ENCODE measurements at regions of chr6 and their contacts with region 1.

Region 1: DNA sequence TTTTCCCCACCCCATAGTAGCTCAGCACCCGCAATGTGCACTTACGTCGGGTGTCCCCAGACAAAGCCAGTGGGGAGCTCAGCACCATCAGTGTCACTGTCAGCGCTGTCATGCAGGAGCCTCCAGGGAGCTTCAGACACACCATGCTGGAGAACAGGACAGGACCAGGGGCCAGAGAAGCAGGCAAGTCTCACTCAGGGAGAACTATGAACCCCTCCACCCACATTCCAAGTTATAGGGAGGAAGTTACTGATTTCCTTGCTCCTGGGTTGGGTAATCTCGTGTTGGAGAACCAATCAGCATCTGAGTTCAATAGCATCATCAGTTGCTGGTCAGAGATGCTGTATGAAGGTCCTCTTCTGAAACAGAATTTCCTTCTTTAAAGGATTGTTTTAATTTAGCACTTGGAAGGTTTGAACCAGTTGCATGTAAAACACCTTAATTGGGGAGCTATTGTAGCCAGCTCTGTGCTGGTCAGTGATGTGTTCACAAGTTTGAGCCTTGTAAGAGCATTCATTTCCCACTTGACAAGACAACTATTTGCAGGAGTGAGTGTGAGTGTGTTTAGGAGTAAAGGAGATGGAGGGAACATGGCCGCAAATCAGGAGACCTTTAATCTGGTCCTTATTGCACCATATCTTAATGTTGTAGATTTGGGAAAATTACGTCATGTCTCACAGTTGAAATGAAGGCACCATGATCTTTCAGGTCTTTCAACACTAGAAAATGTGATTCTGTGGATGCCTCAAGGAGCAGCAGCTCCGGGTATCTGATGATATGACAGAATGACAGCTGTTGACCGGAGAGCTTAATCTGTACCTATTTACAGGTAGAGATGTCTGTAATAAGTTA is at the start of gene HLA-DRB1:
- DNase-seq: peak; percentile 73 to 86 (median 74)
- H3K4me3 ChIP-seq: peak within 1 kb of the TSS; percentile 47 to 83 (median 74)
- H3K4me3 Mint-ChIP-seq: peak within 1 kb of the TSS; percentile 90 to 96
- H3K27ac ChIP-seq: peak within 1 kb of the TSS; percentile 63 to 80
- H3K27ac Mint-ChIP-seq: peak within 1 kb of the TSS; percentile 91 to 99 (median 97)
- H3K4me1 ChIP-seq: peaks cover 0 to 10% of the 10 kb centered on the region in 2 donors
- H3K4me1 Mint-ChIP-seq: peaks cover 58% of the 10 kb centered on the region
- H3K27me3 ChIP-seq: no peaks in the 10 kb centered on the region
- H3K27me3 Mint-ChIP-seq: peaks cover 0 to 2% (median 0%) of the 10 kb centered on the region in 3 donors
- CTCF ChIP-seq: no peak
- polyA plus RNA-seq, gene HLA-DRB1: 928 to 2,792 (median 2,645) TPM

Region 2: GRCh38 chr6:32517654-32518445 is 72.0 kb before region 1 on chr6:
- intact Hi-C with region 1: no loop called
- DNase-seq: peak in 1 of 3 donors; percentile 27
- H3K4me3 ChIP-seq: no peak overlapping the region
- H3K4me3 Mint-ChIP-seq: no peak overlapping the region
- H3K27ac ChIP-seq: no peak overlapping the region
- H3K27ac Mint-ChIP-seq: peak overlapping the region in 1 of 7 donors; percentile 22
- H3K4me1 ChIP-seq: no peaks in the 10 kb centered on the region
- H3K4me1 Mint-ChIP-seq: no peaks in the 10 kb centered on the region
- H3K27me3 ChIP-seq: no peaks in the 10 kb centered on the region
- H3K27me3 Mint-ChIP-seq: no peaks in the 10 kb centered on the region
- CTCF ChIP-seq: no peak

Region 3: GRCh38 chr6:32529697-32530429 is 60.0 kb before region 1 on chr6 and contains the start of gene HLA-DRB5:
- intact Hi-C with region 1: loop called in 1 of 2 experiments (anchors 2 kb)
- DNase-seq: peak; percentile 71 to 84 (median 74)
- H3K4me3 ChIP-seq: peak within 1 kb of the TSS; percentile 50 to 76 (median 51)
- H3K4me3 Mint-ChIP-seq: peak within 1 kb of the TSS; percentile 89 to 95
- H3K27ac ChIP-seq: peak within 1 kb of the TSS; percentile 81 to 92
- H3K27ac Mint-ChIP-seq: peak within 1 kb of the TSS; percentile 94 to 99 (median 98)
- H3K4me1 ChIP-seq: peaks cover 9 to 11% of the 10 kb centered on the region in 2 donors
- H3K4me1 Mint-ChIP-seq: peaks cover 20% of the 10 kb centered on the region
- H3K27me3 ChIP-seq: no peaks in the 10 kb centered on the region
- H3K27me3 Mint-ChIP-seq: no peaks in the 10 kb centered on the region
- CTCF ChIP-seq: no peak
- polyA plus RNA-seq, gene HLA-DRB5: 168 to 1,407 (median 394) TPM

Region 4: GRCh38 chr6:33248925-33249731 is 659.3 kb after region 1 on chr6:
- intact Hi-C with region 1: no loop called
- DNase-seq: peak; percentile 99
- H3K4me3 ChIP-seq: peak overlapping the region; percentile 43 to 77 (median 58)
- H3K4me3 Mint-ChIP-seq: peak overlapping the region; percentile 81 to 92
- H3K27ac ChIP-seq: peak overlapping the region; percentile 92 to 93
- H3K27ac Mint-ChIP-seq: peak overlapping the region; percentile 91 to 97 (median 96)
- H3K4me1 ChIP-seq: peaks cover 24 to 29% of the 10 kb centered on the region in 2 donors
- H3K4me1 Mint-ChIP-seq: peaks cover 32% of the 10 kb centered on the region
- H3K27me3 ChIP-seq: no peaks in the 10 kb centered on the region
- H3K27me3 Mint-ChIP-seq: peaks cover 7 to 13% (median 7%) of the 10 kb centered on the region in 3 donors
- CTCF ChIP-seq: no peak